Endothelial cell of umbilical vein (primary cell): ENCODE measurements at regions of chr14 and their contacts with region 1.

Region 1: DNA sequence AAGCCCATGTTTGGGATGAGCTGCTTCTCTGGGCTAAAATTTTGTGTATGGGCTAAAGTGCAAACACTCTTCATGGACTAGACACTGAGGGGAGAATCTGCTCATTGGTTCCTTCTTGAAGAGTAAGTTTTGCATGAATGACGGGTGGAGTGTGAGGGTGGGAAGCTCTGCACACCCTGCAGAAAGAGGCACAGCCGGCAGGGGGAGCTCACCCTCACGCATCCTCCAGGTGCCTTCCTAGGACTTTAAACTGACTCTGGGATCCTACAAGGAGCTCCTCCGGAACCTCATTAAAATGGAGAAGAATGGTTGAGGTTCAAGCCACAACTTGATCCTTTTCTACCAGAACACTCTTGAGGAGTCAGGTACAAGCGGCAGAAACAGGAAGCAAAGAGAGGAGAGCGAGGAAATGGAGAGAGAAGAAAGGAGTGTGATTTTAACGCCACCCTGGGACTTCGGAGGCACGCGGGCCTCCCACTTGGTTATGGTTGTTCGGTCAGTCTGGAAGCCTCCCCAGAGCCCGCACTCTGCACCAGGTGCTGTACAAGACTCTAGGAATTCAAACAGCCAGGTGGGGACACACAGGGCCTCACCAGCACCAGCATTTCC is 87.5 kb downstream of the SETD3 start:
- DNase-seq: peak; percentile 13
- H3K4me3 ChIP-seq: no peak overlapping the region
- H3K27ac ChIP-seq: no peak overlapping the region
- H3K4me1 ChIP-seq: peaks cover 19% of the 10 kb centered on the region
- H3K27me3 ChIP-seq: no peaks in the 10 kb centered on the region
- CTCF ChIP-seq: peak; percentile 79 to 80
- POLR2A ChIP-seq: no peak

Region 2: DNA sequence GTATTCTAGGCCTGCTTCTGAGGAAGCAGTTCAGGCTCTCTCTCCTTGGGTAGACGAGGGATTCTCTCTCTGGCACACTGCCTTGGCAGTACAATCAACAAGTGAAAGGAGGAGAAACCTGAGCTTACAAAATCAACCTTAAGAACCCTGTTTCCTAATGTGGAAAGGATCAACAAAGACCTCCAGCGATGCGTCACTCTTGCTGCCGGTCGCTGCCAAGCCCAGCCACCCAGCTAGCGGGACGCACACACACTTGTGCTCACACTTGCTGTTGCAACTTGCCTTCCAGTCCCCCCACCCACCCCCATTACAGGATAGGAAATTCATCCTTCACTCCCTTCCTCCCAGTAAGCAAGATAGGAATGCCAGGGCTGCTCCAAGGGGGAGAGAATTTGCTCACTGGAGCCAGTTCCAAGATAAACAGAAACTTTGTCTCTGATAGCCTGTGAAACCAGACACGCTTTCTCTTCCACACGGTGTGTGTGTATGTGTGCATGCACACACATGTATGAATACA is 265.4 kb before region 1 on chr14:
- CTCF ChIA-PET with region 1: no interaction called
- POLR2A ChIA-PET with region 1: no interaction called
- dilution Hi-C with region 1: no loop called
- intact Hi-C with region 1: no loop called
- DNase-seq: no peak
- H3K4me3 ChIP-seq: no peak overlapping the region
- H3K27ac ChIP-seq: no peak overlapping the region
- H3K4me1 ChIP-seq: no peaks in the 10 kb centered on the region
- H3K27me3 ChIP-seq: no peaks in the 10 kb centered on the region
- CTCF ChIP-seq: no peak
- POLR2A ChIP-seq: no peak

Region 3: DNA sequence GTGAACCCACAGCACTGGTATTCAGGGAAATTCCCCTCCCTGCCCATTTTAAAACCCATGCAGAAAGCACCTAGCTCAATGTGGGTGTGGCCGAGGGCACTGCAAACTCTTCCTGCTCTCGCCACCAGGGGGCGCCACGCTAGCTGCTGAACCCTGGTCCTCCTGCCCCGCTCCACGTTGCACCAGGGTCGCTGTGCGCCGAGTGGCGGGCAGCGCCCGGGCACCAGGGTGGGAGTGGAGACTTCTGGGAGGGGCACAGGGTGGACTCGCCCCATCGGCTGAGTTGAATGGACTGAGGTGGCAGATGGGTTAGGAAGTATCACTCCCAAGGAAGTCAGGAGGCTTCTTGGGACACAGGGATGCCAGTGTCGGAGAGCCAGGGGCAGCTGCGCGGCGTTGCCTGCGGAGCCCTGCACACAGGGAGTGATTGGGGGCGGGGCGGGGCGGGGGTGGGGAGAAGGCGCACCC is 73.0 kb before region 1 on chr14:
- CTCF ChIA-PET with region 1: interaction called, 22 read pairs
- POLR2A ChIA-PET with region 1: no interaction called
- dilution Hi-C with region 1: no loop called
- intact Hi-C with region 1: no loop called
- DNase-seq: peak; percentile 32
- H3K4me3 ChIP-seq: no peak overlapping the region
- H3K27ac ChIP-seq: no peak overlapping the region
- H3K4me1 ChIP-seq: no peaks in the 10 kb centered on the region
- H3K27me3 ChIP-seq: no peaks in the 10 kb centered on the region
- CTCF ChIP-seq: peak; percentile 82 to 93
- POLR2A ChIP-seq: no peak

Region 4: GRCh38 chr14:99378782-99379214 is 14.4 kb before region 1 on chr14:
- CTCF ChIA-PET with region 1: interaction called, 24 read pairs
- POLR2A ChIA-PET with region 1: no interaction called
- dilution Hi-C with region 1: no loop called
- intact Hi-C with region 1: no loop called
- DNase-seq: no peak
- H3K4me3 ChIP-seq: no peak overlapping the region
- H3K27ac ChIP-seq: no peak overlapping the region
- H3K4me1 ChIP-seq: no peaks in the 10 kb centered on the region
- H3K27me3 ChIP-seq: no peaks in the 10 kb centered on the region
- CTCF ChIP-seq: no peak
- POLR2A ChIP-seq: no peak

Region 5: GRCh38 chr14:99408286-99408970 is 15.3 kb after region 1 on chr14:
- CTCF ChIA-PET with region 1: interaction called, 237 read pairs
- POLR2A ChIA-PET with region 1: no interaction called
- dilution Hi-C with region 1: no loop called
- intact Hi-C with region 1: no loop called
- DNase-seq: no peak
- H3K4me3 ChIP-seq: no peak overlapping the region
- H3K27ac ChIP-seq: no peak overlapping the region
- H3K4me1 ChIP-seq: no peaks in the 10 kb centered on the region
- H3K27me3 ChIP-seq: no peaks in the 10 kb centered on the region
- CTCF ChIP-seq: no peak
- POLR2A ChIP-seq: no peak

Region 6: GRCh38 chr14:99415496-99416281 is 22.5 kb after region 1 on chr14:
- CTCF ChIA-PET with region 1: interaction called, 237 read pairs
- POLR2A ChIA-PET with region 1: no interaction called
- dilution Hi-C with region 1: no loop called
- intact Hi-C with region 1: loop called (anchors 1 kb)
- DNase-seq: peak; percentile 84
- H3K4me3 ChIP-seq: no peak overlapping the region
- H3K27ac ChIP-seq: no peak overlapping the region
- H3K4me1 ChIP-seq: no peaks in the 10 kb centered on the region
- H3K27me3 ChIP-seq: no peaks in the 10 kb centered on the region
- CTCF ChIP-seq: peak; percentile 66 to 67
- POLR2A ChIP-seq: no peak